Mammary epithelial cell (primary cell): ENCODE measurements at regions of chr15 and their contacts with region 1.

Region 1: DNA sequence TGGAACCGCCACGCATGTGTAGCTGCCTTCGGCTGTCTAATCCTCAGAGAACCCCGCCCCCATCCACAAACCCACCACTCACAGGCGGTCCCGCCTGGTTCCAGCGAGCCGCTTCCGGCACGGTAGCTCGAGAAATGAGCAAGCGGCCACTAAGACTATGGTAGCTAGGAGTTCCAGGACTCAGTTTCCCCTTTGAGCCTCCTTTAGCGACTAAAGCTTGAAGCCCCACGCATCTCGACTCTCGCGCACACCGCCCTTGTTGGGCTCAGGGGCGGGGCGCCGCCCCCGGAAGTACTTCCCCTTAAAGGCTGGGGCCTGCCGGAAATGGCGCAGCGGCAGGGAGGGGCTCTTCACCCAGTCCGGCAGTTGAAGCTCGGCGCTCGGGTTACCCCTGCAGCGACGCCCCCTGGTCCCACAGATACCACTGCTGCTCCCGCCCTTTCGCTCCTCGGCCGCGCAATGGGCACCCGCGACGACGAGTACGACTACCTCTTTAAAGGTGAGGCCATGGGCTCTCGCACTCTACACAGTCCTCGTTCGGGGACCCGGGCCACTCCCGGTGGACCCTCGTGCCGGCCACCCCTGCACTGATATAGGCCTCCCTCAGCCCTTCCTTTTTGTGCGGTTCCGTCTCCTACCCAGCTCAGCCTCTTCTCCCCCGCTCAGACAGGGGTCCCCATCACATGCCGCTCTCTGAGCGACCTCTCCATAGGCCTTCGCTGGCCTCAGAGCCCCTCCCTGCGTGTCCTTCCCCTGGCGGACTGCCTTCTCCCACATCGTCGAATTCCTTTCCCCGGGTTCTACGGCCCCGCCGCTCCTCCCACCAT is at the start of gene RAB11A:
- DNase-seq: peak; percentile 93
- H3K4me3 ChIP-seq: peak within 1 kb of the TSS; percentile 64 to 96 (median 65)
- H3K27ac ChIP-seq: peak within 1 kb of the TSS; percentile 74
- H3K4me1 ChIP-seq: peaks cover 12% of the 10 kb centered on the region
- H3K27me3 ChIP-seq: no peaks in the 10 kb centered on the region
- CTCF ChIP-seq: peak in 1 of 2 donors; percentile 29
- total RNA-seq, gene RAB11A: 215 to 220 TPM

Region 2: DNA sequence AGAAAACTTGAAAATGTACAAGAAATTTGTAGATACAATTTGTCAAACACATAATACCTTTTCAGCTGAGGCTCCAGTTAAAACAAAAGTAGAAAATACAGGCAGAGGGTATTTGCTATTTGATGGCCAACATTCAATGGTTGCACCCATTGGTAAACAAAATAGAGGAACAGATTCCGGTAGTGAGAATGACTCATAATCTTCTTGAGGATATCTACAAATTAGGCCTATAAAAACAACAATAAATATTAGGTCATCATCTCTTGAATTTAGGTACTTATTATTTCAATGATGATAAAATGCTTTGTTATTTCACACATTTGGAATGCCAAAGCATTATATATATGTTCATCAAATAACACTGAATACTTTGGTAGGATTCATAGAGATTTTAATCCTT is 130.7 kb before region 1 on chr15:
- CTCF ChIA-PET with region 1: interaction called, 10 read pairs
- dilution Hi-C with region 1: no loop called
- in situ Hi-C with region 1: no loop called
- intact Hi-C with region 1: no loop called
- DNase-seq: no peak
- H3K4me3 ChIP-seq: no peak overlapping the region
- H3K27ac ChIP-seq: no peak overlapping the region
- H3K4me1 ChIP-seq: no peaks in the 10 kb centered on the region
- H3K27me3 ChIP-seq: no peaks in the 10 kb centered on the region
- CTCF ChIP-seq: no peak

Region 3: DNA sequence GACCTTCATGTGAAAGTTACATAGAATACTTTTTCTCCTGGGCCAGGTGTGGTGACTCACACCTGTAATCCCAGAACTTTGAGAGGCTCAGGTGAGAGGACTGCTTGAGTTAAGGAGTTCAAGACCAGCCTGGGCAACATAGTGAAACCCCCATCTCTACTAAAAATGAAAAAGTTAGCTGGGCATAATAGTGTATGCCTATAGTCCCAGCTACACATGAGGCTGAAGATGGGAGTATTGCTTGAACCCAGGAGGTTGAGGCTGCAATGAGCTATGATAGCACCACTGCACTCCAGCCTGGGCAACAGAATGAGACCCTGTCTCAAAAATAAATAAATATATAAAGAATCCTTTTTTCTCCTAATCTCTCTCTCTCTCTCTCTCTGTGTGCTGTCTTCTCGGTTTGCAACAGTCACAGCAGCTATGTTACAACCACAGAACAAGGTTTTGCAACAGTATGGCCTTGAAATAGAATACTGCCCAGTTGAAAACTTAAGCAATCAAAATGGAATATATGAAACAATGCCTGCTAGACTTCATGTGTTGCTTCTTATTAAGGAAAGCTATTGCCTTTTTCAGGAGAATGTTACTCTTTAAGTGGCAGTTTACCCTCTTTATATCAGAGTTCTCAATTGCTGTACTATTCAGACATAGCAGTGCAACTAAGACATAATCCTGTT is 64.9 kb before region 1 on chr15:
- CTCF ChIA-PET with region 1: no interaction called
- dilution Hi-C with region 1: loop called (anchors 5 kb)
- in situ Hi-C with region 1: no loop called
- intact Hi-C with region 1: no loop called
- DNase-seq: no peak
- H3K4me3 ChIP-seq: no peak overlapping the region
- H3K27ac ChIP-seq: no peak overlapping the region
- H3K4me1 ChIP-seq: no peaks in the 10 kb centered on the region
- H3K27me3 ChIP-seq: no peaks in the 10 kb centered on the region
- CTCF ChIP-seq: no peak